ENCODE measurements at regions of chr1 and their contacts with region 1.

Region 1: DNA sequence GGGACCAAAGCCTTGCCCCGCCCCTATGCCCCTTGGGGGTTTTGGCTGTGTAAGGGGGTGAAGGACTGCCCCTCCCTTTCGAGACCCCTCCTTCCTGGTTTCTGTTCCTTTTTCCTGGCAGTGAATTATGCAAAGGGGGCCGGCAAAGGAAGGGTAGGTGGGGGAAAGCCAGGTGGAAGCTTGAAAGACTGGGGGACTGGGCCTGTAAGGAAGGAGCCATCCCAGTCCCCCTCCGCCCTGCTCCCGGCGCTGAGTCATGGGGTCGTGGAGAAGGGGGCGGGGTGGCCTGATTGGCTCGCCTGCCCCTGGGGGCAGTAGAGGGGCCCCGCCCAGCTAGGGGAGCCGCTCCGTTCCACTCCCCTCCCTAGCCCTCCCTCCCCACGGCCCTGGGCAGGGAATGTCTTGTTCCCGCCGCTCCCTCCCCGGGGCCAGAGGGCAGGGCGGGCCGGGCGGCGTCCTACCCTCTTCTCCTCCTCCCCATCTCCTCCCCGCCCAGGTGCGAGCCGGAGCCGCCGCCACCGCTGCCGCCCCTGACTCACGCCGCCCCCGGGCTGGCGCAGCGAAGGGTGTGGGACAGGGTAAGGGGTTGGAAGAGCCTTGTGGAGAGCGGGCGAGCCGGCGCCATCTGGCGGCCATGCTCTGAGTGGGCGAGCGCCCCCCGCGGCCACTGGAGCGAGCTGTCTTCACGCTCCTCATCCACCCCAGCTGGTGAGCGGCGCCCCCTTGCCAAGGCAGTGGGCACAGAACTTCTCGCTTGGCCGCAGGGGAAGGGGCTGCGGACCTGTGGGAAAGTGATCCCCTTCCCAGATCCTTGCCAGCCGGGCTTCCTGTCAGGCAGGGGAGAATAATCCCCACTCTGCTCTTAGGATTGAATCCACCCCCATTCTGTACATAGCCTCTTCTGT is 14.7 kb downstream of the ZBTB7B start:
- DNase-seq: peak; percentile 94 to 96
- ATAC-seq: peak; percentile 81

Region 2: GRCh38 chr1:154906621-154907081 is 110.6 kb before region 1 on chr1:
- intact Hi-C with region 1: no loop called
- DNase-seq: peak in 1 of 2 donors; percentile 24
- ATAC-seq: peak; percentile 94

Region 3: DNA sequence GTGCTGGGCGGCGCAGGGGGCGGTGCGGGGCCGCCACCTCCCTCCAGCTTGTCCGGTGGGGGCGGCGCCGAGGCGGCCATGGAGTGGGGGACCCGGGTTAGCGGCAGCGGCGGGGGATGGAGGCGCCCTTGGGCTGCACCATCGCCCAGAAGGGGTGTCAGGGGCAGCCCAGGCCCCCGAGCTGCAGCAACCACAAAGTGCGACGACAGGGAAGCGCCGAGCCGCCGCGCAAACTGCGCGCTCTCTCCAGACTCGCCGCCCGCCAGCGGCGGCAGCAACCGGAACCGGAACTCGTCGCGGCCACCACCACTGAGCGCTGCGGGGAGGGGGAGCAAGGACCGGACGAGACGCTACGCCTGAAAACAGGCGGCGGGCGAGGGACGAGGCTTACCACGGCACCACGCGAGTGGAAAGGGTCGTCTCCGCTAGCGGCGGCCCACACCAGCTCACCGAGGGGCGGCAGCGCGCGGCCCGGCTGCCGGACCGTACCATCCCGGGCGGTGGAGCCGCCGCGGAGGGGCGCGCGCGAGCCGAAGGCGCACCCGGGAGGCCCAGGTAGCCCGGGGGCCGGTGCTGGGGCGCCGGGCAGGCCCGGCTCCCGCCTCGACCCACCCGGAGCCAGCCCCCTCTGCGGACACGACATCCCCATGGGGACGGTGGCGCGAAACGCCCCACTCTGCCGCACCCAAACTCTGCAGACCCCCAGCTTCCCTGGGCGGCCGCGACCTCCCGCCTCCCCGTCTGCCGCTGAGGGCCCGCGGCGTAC is 55.6 kb before region 1 on chr1 and contains the start of gene PYGO2:
- intact Hi-C with region 1: loop called in 1 of 2 experiments (anchors 10 kb)
- DNase-seq: peak; percentile 74 to 90
- ATAC-seq: peak; percentile 86
- total RNA-seq, gene PYGO2: 27.0 to 31.3 TPM

Measured in left colon (tissue), 2 donors.